Heart right ventricle (tissue), 16 donors: ENCODE measurements at regions of chr20 and their contacts with region 1.

Region 1: GRCh38 chr20:3106658-3107463 is 22.3 kb upstream of the AVP start:
- DNase-seq: no peak
- ATAC-seq: no peak
- H3K4me3 ChIP-seq: no peak overlapping the region
- H3K27ac ChIP-seq: no peak overlapping the region
- H3K4me1 ChIP-seq: peaks cover 0 to 19% (median 0%) of the 10 kb centered on the region in 9 donors
- H3K27me3 ChIP-seq: no peaks in the 10 kb centered on the region
- CTCF ChIP-seq: no peak

Region 2: DNA sequence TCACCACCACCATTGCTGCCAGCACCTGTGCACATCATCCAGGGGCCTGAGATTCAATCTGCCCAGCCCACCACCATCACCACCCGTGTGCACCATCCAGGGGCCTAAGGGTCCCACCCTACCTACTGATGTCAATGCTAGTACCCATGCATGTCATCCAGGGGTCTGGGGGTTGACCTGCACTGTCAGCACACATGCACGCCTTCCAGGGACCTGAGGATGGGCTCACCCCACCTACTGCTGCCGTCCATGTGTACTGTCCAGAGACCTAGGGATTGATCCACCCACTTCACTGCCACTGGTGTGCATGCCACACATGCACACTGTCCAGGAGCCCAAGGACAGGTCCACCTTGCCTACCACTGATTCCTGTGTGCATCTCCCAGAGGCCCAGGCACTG is 47.4 kb before region 1 on chr20:
- intact Hi-C with region 1: loop called in 3 of 10 experiments (anchors 5 kb)
- DNase-seq: no peak
- ATAC-seq: no peak
- H3K4me3 ChIP-seq: no peak overlapping the region
- H3K27ac ChIP-seq: no peak overlapping the region
- H3K4me1 ChIP-seq: no peaks in the 10 kb centered on the region
- H3K27me3 ChIP-seq: no peaks in the 10 kb centered on the region
- CTCF ChIP-seq: no peak

Region 3: DNA sequence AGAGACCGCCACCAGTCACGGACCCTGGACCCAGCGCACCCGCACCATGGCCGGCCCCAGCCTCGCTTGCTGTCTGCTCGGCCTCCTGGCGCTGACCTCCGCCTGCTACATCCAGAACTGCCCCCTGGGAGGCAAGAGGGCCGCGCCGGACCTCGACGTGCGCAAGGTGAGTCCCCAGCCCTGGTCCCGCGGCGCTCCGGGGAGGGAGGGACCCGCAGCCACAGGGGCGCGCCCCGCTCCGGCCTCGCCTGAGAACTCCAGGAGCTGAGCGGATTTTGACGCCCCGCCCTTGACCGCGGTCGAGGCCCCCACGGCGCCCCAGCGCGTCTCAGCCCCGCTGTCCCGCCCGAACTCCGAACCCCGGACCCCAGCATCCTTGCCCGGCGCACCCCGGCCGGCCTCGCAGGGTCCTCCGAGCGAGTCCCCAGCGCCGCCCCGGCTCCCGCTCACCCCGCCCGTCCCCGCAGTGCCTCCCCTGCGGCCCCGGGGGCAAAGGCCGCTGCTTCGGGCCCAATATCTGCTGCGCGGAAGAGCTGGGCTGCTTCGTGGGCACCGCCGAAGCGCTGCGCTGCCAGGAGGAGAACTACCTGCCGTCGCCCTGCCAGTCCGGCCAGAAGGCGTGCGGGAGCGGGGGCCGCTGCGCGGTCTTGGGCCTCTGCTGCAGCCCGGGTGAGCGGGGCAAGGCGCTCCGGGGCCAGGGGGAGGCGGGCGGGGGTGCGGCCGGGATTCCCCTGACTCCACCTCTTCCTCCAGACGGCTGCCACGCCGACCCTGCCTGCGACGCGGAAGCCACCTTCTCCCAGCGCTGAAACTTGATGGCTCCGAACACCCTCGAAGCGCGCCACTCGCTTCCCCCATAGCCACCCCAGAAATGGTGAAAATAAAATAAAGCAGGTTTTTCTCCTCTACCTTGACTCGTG is 35.0 kb before region 1 on chr20 and contains the start of gene OXT:
- intact Hi-C with region 1: no loop called
- DNase-seq: peak; percentile 33 to 62
- ATAC-seq: peak; percentile 53 to 87 (median 74)
- H3K4me3 ChIP-seq: peak within 1 kb of the TSS; percentile 35 to 71 (median 60)
- H3K27ac ChIP-seq: peak within 1 kb of the TSS in 4 of 10 donors; percentile 9 to 66 (median 42)
- H3K4me1 ChIP-seq: peaks cover 0 to 18% (median 10%) of the 10 kb centered on the region in 9 donors
- H3K27me3 ChIP-seq: peaks cover 0 to 40% (median 23%) of the 10 kb centered on the region in 7 donors
- CTCF ChIP-seq: no peak
- total RNA-seq, gene OXT: 0.56 to 1.3 (median 0.59) TPM in 3 of 10 donors, not detected in the others

Region 4: GRCh38 chr20:3163137-3164047 is 56.5 kb after region 1 on chr20:
- intact Hi-C with region 1: no loop called
- DNase-seq: no peak
- ATAC-seq: no peak
- H3K4me3 ChIP-seq: no peak overlapping the region
- H3K27ac ChIP-seq: no peak overlapping the region
- H3K4me1 ChIP-seq: peaks cover 3 to 26% (median 19%) of the 10 kb centered on the region in 9 donors
- H3K27me3 ChIP-seq: peaks cover 0 to 22% (median 0%) of the 10 kb centered on the region in 7 donors
- CTCF ChIP-seq: no peak

Region 5: GRCh38 chr20:3173610-3174441 is 67.0 kb after region 1 on chr20:
- intact Hi-C with region 1: loop called in 1 of 10 experiments (anchors 2 kb)
- DNase-seq: peak; percentile 90 to 94
- ATAC-seq: peak; percentile 91 to 99 (median 95)
- H3K4me3 ChIP-seq: peak overlapping the region; percentile 66 to 97 (median 94)
- H3K27ac ChIP-seq: peak overlapping the region in 9 of 10 donors; percentile 47 to 86 (median 78)
- H3K4me1 ChIP-seq: peaks cover 3 to 31% (median 24%) of the 10 kb centered on the region in 9 donors
- H3K27me3 ChIP-seq: peaks cover 0 to 45% (median 0%) of the 10 kb centered on the region in 7 donors
- CTCF ChIP-seq: peak in 3 of 9 donors; percentile 12 to 31 (median 30)